PC-9 (cell line): ENCODE measurements at regions of chr16 and their contacts with region 1.

Region 1: DNA sequence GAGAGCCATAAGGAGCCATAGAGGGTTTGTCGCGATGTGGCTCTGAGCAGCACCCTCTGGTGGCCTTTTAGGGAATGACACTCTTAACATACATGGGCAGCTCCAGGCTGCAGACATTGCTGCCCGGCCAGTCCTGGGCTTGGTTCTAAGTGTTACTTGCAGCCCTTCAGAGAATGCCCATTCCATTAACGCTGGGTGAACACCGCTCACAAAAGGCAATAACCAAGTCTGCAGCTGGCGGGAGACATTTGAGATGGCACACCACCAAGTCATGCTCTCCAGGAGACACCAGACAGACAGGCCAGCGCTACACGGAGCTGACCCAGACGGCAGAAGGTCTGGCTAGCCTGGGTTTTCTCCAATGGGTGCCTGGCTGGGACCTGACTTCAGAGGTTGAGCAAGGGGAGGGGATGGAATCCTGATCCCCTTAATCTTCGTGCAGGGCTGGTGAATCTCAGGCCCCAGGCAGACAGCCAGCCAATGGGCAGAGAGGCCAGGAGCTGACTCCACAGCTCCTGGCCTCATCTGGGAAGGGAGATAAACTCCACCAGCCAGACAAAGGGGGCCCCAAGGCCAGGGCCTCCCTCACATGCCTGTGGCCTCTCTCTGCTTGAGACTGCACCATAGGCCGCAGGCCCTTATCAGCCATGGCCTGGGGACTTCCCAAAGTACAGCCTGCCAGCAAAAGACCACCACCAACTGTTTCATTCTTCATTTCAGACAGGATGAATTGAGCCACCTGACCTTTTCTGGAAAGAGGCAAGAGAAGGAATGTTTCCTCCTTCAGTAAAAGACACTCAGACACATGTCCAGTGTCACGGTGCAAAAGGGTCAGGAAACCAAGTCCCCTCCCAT is 58.8 kb downstream of the ZDHHC7 start:
- DNase-seq: peak; percentile 67 to 76
- H3K4me3 ChIP-seq: no peak overlapping the region
- H3K27ac ChIP-seq: no peak overlapping the region
- H3K4me1 ChIP-seq: peaks cover 7% of the 10 kb centered on the region; the same call in 1 of the 2 replicates
- H3K27me3 ChIP-seq: no peaks in the 10 kb centered on the region
- CTCF ChIP-seq: peak; percentile 89

Region 2: DNA sequence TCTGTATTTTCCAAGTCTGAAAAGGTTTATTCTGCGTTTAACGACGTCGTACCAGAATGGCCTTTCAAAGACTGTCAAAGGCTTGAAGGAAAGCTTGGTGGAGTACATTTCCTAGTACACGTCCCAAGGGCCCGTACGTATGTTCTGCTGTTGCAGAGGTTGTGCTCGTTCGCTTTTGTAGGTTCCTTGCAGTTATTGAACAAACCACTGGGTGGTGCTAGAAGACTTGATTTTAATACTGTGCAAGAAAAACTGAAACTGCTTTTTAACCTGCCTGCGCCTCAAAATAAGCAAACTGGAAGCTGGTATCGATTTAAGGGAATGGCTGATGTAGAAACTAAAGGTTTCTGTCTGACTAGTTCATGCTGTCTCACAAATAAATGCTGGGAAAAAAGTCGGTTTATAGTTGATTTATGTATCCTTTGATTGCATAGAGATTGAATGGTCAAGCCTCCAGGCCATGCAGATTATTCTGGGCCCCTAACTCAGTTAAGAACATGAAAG is 198.2 kb before region 1 on chr16:
- CTCF ChIA-PET with region 1: interaction called, 3 read pairs
- POLR2A ChIA-PET with region 1: no interaction called
- intact Hi-C with region 1: loop called (anchors 1 kb)
- DNase-seq: peak; percentile 61 to 75
- H3K4me3 ChIP-seq: no peak overlapping the region
- H3K27ac ChIP-seq: peak overlapping the region; percentile 22
- H3K4me1 ChIP-seq: peaks cover 11% of the 10 kb centered on the region; the same call in 1 of the 2 replicates
- H3K27me3 ChIP-seq: no peaks in the 10 kb centered on the region
- CTCF ChIP-seq: peak; percentile 92

Region 3: DNA sequence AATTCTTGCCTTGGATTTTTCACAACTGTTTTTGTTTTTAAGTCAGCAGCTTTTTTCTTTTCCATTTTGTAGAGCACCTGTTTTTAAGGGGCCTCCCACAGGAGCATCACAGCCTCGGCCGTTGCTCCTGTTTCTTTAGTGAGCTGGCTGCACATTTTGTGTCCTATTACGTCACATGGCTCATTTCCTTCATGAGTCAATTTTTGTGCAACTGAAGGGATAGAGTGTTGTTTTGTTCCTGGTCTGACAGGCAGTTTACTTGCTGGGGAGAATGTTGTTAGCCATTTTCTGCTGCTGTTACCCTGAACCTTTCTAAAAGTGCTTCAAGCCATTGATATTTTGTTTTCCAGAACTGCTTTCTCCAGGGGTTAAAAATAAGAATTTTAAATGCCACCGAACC is 177.8 kb before region 1 on chr16:
- CTCF ChIA-PET with region 1: no interaction called
- POLR2A ChIA-PET with region 1: no interaction called
- intact Hi-C with region 1: loop called (anchors 5 kb)
- DNase-seq: peak in 1 of 2 experiments; percentile 57
- H3K4me3 ChIP-seq: no peak overlapping the region
- H3K27ac ChIP-seq: no peak overlapping the region
- H3K4me1 ChIP-seq: no peaks in the 10 kb centered on the region
- H3K27me3 ChIP-seq: no peaks in the 10 kb centered on the region
- CTCF ChIP-seq: no peak

Region 4: DNA sequence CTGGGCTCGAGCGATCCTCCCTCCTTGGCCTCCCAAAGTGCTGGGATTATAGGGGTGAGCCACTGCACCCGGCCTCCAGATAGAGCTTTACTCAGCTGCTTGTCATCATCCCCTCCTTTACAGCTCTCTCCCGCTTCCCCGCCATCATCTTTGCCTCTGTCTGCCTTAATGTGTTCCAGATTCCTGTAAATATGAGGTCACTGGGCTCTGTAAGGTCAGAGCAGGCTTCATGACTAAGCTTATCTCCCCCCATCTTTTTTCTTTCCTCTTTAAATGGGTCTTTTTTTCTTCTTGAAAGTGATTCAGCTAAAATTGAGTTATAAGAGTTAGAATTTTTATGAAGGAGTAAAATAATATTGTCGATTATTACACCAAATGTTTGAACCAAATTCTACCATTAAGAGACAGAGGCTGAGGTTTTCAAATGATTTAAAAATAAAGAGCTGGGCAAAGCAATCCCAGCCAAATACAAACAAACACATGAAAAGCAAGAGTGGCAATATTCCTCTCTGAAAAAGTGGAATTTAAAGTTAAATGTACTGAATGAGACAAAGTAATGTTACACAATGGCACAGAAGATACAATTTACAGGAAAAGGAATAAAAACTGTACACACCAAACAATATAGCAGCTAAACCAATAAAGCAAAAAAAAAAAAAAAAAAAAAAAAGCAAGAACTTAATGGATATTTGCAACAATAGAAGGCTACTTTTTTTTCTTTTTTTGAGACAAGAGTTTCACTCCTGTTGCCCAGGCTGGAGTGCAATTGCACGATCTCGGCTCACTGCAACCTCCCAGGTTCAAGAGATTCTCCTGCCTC is 70.7 kb before region 1 on chr16:
- CTCF ChIA-PET with region 1: no interaction called
- POLR2A ChIA-PET with region 1: no interaction called
- intact Hi-C with region 1: loop called (anchors 2 kb)
- DNase-seq: peak; percentile 55 to 77
- H3K4me3 ChIP-seq: no peak overlapping the region
- H3K27ac ChIP-seq: peak overlapping the region; percentile 78
- H3K4me1 ChIP-seq: peaks cover 68% of the 10 kb centered on the region
- H3K27me3 ChIP-seq: no peaks in the 10 kb centered on the region
- CTCF ChIP-seq: no peak

Region 5: GRCh38 chr16:84925092-84925772 is 27.3 kb before region 1 on chr16:
- CTCF ChIA-PET with region 1: interaction called, 7 read pairs
- POLR2A ChIA-PET with region 1: no interaction called
- intact Hi-C with region 1: loop called (anchors 2 kb)
- DNase-seq: peak in 1 of 2 experiments; percentile 53
- H3K4me3 ChIP-seq: no peak overlapping the region
- H3K27ac ChIP-seq: no peak overlapping the region
- H3K4me1 ChIP-seq: no peaks in the 10 kb centered on the region
- H3K27me3 ChIP-seq: no peaks in the 10 kb centered on the region
- CTCF ChIP-seq: peak; percentile 98

Region 6: DNA sequence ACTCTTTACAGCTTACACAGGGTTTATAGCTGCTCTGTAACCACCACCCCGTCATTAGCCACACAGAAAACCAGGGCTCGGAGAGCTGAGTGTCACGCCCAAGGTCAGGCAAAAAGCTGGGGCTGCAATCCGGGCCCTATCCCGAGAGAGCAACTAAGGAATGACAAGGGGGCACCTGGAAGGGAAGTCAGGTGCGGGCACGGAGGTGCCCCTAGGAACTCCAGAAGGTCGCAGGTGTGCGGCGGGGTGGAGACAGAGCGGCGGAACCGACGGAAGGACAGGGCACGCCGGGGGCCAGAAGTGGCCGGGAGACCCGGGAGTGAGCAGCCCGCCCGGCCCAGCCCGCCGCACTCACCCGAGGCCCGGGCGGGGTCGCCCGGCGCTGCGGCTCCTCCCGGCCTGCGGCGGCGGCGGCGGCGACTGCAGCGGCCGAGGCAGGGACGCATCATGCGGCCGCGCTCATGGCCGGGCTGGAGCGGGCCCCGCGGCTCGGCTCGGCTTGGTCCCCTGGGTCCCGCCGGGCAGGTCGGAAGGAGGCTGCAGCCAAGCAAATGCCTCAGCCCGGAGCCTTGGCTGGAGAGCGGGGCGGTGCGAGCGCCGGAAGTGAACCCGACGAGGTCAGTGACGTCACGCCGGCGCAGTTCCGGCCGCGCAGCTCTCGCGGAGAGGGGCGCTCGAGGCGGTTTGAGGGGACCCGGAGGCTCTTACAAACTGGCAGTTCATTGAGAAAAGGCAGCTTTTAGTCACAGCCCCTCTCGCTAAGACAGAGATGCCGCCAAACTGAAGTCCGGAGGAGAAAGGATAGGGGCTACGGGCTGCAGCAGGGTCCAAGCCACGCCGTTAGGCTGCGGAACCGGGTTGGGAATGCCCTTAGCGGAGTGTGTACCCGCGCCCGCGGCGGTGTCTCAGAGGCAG is 58.6 kb after region 1 on chr16 and contains the start of gene ZDHHC7:
- CTCF ChIA-PET with region 1: interaction called, 11 read pairs
- POLR2A ChIA-PET with region 1: no interaction called
- intact Hi-C with region 1: no loop called
- DNase-seq: peak; percentile 66 to 78
- H3K4me3 ChIP-seq: peak within 1 kb of the TSS; percentile 97
- H3K27ac ChIP-seq: peak within 1 kb of the TSS; percentile 81
- H3K4me1 ChIP-seq: peaks cover 28% of the 10 kb centered on the region
- H3K27me3 ChIP-seq: no peaks in the 10 kb centered on the region
- CTCF ChIP-seq: no peak
- total RNA-seq, gene ZDHHC7: 79.3 and 85.1 TPM in 2 replicates